ENCODE measurements at regions of chrX and their contacts with region 1.

Region 1: GRCh38 chrX:48794911-48795501 is 6.9 kb upstream of the HDAC6 start:
- DNase-seq: no peak
- ATAC-seq: no peak
- H3K4me3 ChIP-seq: no peak overlapping the region
- H3K27ac ChIP-seq: no peak overlapping the region
- H3K4me1 ChIP-seq: no peaks in the 10 kb centered on the region
- H3K27me3 ChIP-seq: no peaks in the 10 kb centered on the region

Region 2: GRCh38 chrX:48747415-48748016 is 47.5 kb before region 1 on chrX:
- intact Hi-C with region 1: loop called in 1 of 4 experiments (anchors 10 kb)
- DNase-seq: no peak
- ATAC-seq: no peak
- H3K4me3 ChIP-seq: no peak overlapping the region
- H3K27ac ChIP-seq: no peak overlapping the region
- H3K4me1 ChIP-seq: no peaks in the 10 kb centered on the region
- H3K27me3 ChIP-seq: no peaks in the 10 kb centered on the region